Mammary epithelial cell (primary cell): ENCODE measurements at regions of chr10 and their contacts with region 1.

Region 1: GRCh38 chr10:133139551-133140065 is 20.4 kb upstream of the KNDC1 start:
- DNase-seq: no peak
- H3K4me3 ChIP-seq: no peak overlapping the region
- H3K27ac ChIP-seq: no peak overlapping the region
- H3K4me1 ChIP-seq: no peaks in the 10 kb centered on the region
- H3K27me3 ChIP-seq: peaks cover 2% of the 10 kb centered on the region
- CTCF ChIP-seq: no peak

Region 2: DNA sequence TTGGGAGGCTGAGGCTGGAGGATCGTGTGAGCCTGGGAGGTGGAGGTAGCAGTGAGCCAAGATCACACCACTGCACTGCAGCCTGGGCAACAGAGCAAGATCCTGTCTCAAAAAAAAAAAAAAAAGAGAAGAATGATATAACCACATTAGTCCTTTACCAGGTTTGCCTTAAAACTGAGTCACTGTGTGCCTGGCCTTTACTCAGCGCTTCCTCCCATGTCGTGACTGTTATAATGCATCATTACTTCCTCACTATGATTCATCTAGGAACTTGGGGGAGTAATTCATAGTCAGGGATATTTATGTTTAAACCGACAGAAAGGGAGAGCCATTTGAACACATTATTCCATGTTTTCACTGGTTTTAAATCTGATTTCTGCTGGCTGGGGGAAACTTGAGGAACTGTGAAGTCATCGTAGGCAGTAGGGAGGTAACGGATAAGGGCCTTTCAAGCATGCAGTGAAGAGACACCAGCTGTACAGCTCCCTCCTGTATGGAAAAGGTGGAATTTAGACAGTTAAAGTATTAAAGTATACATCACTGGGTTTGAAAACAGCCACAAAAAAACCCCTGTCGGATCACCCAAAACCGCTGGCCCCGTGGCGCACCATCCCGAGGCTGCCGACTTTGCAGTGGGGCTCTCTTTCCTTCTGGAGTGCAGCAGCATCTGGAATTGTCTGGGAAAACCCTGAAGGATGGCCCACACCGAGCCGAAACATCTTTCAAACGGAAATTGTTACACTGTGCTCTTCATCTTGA is 473.5 kb before region 1 on chr10:
- CTCF ChIA-PET with region 1: no interaction called
- dilution Hi-C with region 1: loop called (anchors 10 kb)
- in situ Hi-C with region 1: no loop called
- intact Hi-C with region 1: no loop called
- DNase-seq: peak; percentile 85
- H3K4me3 ChIP-seq: no peak overlapping the region
- H3K27ac ChIP-seq: peak overlapping the region; percentile 54
- H3K4me1 ChIP-seq: peaks cover 32% of the 10 kb centered on the region
- H3K27me3 ChIP-seq: no peaks in the 10 kb centered on the region
- CTCF ChIP-seq: no peak

Region 3: DNA sequence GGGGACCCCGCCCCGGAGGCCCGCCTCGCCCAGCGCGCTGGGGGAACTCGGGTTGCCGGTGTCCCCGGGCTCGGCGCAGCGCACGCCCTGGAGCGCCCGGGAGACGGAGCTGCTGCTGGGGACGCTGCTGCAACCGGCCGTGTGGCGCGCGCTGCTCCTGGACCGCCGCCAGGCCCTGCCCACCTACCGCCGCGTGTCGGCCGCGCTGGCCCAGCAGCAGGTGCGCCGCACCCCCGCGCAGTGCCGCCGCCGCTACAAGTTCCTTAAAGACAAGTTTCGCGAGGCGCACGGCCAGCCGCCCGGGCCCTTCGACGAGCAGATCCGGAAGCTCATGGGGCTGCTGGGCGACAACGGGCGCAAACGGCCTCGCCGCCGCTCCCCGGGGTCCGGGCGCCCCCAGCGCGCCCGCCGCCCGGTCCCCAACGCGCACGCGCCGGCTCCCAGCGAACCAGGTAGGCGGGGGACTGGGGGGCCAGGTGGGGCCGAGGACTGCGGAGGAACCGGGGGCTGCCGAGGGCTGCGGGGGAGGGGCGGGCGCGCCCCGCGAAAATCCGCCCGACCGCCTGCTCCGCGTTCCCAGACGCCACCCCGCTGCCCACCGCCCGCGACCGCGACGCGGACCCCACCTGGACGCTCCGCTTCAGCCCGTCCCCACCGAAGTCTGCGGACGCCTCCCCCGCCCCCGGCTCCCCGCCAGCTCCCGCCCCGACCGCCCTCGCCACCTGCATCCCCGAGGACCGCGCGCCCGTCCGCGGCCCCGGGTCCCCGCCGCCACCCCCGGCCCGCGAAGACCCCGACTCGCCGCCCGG is 91.0 kb after region 1 on chr10:
- CTCF ChIA-PET with region 1: no interaction called
- dilution Hi-C with region 1: no loop called
- in situ Hi-C with region 1: no loop called
- intact Hi-C with region 1: loop called (anchors 5 kb)
- DNase-seq: no peak
- H3K4me3 ChIP-seq: no peak overlapping the region
- H3K27ac ChIP-seq: no peak overlapping the region
- H3K4me1 ChIP-seq: peaks cover 1% of the 10 kb centered on the region
- H3K27me3 ChIP-seq: peaks cover 33% of the 10 kb centered on the region
- CTCF ChIP-seq: no peak

Region 4: GRCh38 chr10:133336577-133337369 is 197.2 kb after region 1 on chr10 and contains the start of gene CALY:
- CTCF ChIA-PET with region 1: no interaction called
- dilution Hi-C with region 1: no loop called
- in situ Hi-C with region 1: no loop called
- intact Hi-C with region 1: no loop called
- DNase-seq: no peak
- H3K4me3 ChIP-seq: no peak within 1 kb of the TSS
- H3K27ac ChIP-seq: no peak within 1 kb of the TSS
- H3K4me1 ChIP-seq: peaks cover 19% of the 10 kb centered on the region
- H3K27me3 ChIP-seq: peaks cover 23% of the 10 kb centered on the region
- CTCF ChIP-seq: no peak
- total RNA-seq, gene CALY: not detected